ENCODE measurements at regions of chr4 and their contacts with region 1.

Region 1: DNA sequence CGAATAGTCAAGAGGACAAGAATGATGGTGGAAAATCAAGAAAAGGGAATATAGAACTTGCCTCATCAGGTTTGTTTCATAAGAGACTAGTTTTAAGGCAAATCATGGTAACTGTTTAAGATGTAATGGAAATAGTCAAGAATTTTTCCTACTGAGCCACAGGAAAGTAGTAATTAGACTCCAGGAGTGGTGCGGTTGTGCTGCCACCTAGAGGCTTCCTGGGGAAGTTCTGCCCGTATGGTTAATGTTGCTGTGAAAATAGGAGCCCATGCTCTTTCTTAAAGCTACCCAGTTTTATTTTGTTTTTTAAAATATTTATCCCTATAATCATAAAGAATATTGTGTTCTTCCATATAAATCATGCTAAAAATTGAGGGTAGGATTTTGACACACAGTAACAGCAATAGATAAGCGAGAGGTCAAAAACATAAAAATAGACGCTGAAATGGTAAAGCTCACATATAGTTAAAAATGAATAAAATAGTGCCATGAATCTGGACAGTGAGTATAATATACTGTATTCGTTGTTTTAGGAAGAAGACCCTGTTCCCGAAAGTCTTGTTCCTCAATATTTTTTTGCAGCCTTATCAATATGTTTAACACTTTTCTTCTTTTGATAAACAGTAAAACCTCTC is 87.0 kb downstream of the PHOX2B start:
- DNase-seq: no peak
- H3K4me3 ChIP-seq: no peak overlapping the region
- H3K27ac ChIP-seq: no peak overlapping the region
- H3K4me1 ChIP-seq: peaks cover 0 to 4% (median 0%) of the 10 kb centered on the region in 3 donors
- H3K27me3 ChIP-seq: no peaks in the 10 kb centered on the region
- CTCF ChIP-seq: peak; percentile 81 to 94 (median 88)
- POLR2A ChIP-seq: no peak

Region 2: DNA sequence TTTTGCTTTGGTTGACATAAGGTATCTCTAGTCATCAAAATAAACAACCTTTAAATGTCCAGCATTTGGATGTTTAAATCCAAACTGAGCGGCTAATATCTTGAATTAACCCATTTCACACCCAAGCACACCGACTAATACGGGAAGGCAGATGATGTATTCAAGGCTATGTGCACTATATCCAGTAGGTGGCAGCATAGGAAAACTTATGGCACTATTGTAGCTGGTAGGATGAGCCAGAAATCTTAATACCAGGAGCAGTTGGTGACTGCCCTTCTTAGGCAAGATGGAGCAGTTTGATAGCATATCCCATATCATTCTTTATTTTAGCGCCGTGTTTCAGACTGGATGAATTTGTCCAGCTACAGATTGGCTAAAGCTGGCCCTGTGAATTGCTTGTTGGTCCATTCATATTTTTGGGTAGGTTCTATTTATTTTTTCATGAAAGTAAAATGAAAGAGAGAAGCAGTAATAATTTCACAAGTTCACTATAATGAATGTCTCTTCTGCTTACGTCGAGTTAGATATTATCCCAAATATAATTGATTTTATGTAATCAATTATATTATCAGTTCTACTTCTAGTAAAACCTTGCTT is 380.4 kb before region 1 on chr4:
- intact Hi-C with region 1: loop called (anchors 5 kb)
- DNase-seq: no peak
- H3K4me3 ChIP-seq: no peak overlapping the region
- H3K27ac ChIP-seq: no peak overlapping the region
- H3K4me1 ChIP-seq: peaks cover 0 to 6% (median 0%) of the 10 kb centered on the region in 3 donors
- H3K27me3 ChIP-seq: peaks cover 0 to 10% (median 0%) of the 10 kb centered on the region in 4 donors
- CTCF ChIP-seq: peak; percentile 73 to 92 (median 86)
- POLR2A ChIP-seq: no peak

Region 3: GRCh38 chr4:41990365-41991111 is 329.0 kb after region 1 on chr4 and contains the start of gene SLC30A9:
- intact Hi-C with region 1: no loop called
- DNase-seq: peak; percentile 68
- H3K4me3 ChIP-seq: peak within 1 kb of the TSS; percentile 82 to 99 (median 94)
- H3K27ac ChIP-seq: peak within 1 kb of the TSS; percentile 84 to 93 (median 88)
- H3K4me1 ChIP-seq: peaks cover 9 to 35% (median 13%) of the 10 kb centered on the region in 3 donors
- H3K27me3 ChIP-seq: no peaks in the 10 kb centered on the region
- CTCF ChIP-seq: peak in 4 of 6 experiments; percentile 37 to 61 (median 45)
- POLR2A ChIP-seq: peak in 3 of 4 donors; percentile 44 to 88 (median 81)
- total RNA-seq, gene SLC30A9: 37.1 to 52.7 (median 46.4) TPM

Measured in esophagus squamous epithelium (tissue), 5 donors.